ENCODE measurements at regions of chr3 and their contacts with region 1.

Region 1: DNA sequence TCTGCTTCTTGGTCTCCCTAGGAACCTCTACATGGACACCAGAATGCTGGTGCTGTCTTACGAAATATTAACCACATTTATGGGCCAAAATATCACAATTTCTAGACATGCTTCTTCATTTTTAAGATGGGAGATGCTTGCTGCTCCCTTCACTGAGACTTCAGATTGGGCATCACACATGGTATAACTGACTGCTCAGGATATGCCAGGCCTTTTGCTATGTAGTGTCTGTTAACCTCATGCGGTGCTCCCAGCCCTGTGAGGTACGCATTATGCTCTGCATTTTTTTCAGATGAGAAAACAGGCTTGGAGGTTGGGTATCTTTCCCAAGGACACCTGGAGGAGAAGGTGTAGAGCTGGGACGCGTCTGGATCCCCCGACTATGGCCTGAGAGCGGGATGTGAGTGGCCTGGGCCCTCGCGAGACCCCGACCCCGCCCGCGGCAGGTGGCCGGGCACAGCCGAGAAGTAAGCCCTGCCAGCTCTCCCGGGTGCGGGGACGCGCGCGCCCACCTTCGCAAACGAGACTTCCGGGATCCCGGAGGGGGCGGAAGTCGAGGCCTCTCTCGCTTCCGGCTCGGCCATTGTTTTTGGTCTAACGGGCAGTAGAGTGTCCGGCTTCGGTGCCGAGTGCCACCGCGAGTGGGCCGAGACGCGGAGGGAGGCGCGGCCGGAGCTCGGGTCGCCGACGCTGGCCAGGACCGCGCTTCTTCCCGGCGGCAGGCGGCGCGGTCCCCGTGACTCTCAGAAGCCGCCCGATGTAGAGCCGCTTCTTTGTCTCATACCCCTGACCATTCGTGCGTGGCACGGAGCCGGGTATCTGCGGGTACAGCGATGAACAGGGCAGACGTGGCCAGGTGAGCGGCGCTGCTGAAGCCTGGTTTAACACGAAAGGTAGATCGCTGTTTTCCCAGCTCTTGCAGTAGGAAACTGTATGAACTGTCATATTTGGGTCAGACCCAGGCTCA is at the start of gene ZKSCAN7:
- DNase-seq: peak; percentile 52
- H3K4me3 Mint-ChIP-seq: peak within 1 kb of the TSS; percentile 82
- H3K27ac Mint-ChIP-seq: peak within 1 kb of the TSS; percentile 1
- H3K4me1 Mint-ChIP-seq: peaks cover 12% of the 10 kb centered on the region
- H3K27me3 Mint-ChIP-seq: peaks cover 6% of the 10 kb centered on the region
- total RNA-seq, gene ZKSCAN7: 1.5 to 1.7 TPM

Region 2: GRCh38 chr3:44624749-44625480 is 70.0 kb after region 1 on chr3 and contains the start of gene ZNF197:
- CTCF ChIA-PET with region 1: no interaction called
- intact Hi-C with region 1: loop called (anchors 5 kb)
- DNase-seq: peak; percentile 77
- H3K4me3 Mint-ChIP-seq: peak within 1 kb of the TSS; percentile 88
- H3K27ac Mint-ChIP-seq: peak within 1 kb of the TSS; percentile 79
- H3K4me1 Mint-ChIP-seq: peaks cover 28% of the 10 kb centered on the region
- H3K27me3 Mint-ChIP-seq: no peaks in the 10 kb centered on the region
- total RNA-seq, gene ZNF197: 7.7 to 8.4 TPM

Region 3: DNA sequence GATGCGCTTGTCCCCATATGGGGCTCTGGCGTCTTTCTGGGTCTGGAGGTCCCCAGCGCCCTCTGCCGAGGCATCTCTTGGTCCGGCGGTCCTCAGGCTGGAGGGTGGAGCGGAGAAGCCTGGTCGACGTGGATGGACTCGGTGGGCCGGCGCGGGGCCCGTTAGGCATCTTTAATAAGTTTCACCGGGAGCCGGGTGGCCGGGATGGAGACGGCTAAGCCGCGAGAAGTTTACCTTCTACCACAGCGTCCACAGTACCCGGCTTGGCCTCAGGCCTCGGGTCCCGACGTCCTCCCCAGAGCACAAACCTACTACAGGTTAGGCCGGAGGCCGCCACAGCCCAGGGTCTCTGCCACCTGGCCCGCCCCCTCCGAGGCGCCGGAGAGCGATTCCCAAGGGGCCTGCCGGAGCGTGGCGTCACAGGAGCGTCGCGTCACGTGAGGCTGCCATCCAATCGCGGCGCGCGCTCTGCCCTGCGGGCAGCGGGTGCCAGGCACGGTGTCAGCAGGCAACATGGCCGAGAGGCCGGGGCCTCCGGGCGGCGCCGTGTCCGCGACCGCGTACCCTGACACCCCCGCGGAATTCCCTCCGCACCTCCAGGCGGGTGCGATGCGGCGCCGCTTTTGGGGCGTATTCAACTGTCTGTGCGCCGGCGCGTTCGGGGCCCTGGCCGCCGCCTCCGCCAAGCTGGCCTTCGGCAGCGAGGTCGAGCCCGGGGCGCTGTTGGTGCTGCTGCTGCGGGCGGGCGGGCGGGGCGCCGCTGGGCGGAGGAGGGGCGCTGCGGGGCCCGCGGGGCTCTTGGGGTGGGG is 306.7 kb after region 1 on chr3 and contains the start of gene TMEM42:
- CTCF ChIA-PET with region 1: no interaction called
- intact Hi-C with region 1: loop called (anchors 2 kb)
- DNase-seq: peak; percentile 86
- H3K4me3 Mint-ChIP-seq: peak within 1 kb of the TSS; percentile 84
- H3K27ac Mint-ChIP-seq: peak within 1 kb of the TSS; percentile 78
- H3K4me1 Mint-ChIP-seq: peaks cover 38% of the 10 kb centered on the region
- H3K27me3 Mint-ChIP-seq: no peaks in the 10 kb centered on the region
- total RNA-seq, gene TMEM42: 13.9 to 15.8 TPM